BJ (cell line): ENCODE measurements at regions of chr11 and their contacts with region 1.

Region 1: DNA sequence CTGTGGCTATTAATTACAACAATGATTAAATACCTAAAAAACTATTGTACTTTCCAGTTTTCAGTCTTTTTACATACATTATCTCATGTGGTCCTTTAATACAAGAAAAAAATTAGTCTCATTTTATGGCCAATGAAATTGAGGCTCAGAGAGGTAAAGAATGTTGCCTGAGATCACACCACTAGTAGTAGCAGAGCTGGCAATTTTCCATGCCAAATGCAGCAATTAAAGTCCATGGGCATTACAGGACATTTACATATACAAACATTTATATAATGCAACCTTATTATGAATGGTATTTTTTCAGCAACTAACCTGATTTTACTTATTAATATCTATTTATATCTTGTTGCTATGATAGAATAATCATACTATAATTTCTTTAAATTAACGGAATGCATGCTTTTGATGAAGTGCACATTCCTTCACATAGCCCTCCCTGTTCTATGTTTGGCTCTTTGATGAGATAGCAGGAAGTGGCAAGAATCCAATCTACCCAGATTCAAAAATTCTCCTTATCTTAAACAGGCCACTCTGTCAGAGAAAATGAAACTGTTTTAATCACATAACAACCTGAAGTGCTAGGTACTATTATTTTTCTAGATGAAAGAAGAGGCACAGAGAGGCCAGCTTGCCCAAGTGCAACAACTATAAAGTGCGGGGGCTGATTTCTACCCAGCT is 120.9 kb upstream of the LDLRAD3 start:
- DNase-seq: no peak
- H3K4me3 ChIP-seq: no peak overlapping the region
- H3K27me3 ChIP-seq: no peaks in the 10 kb centered on the region; the same call in 1 of the 2 replicates
- CTCF ChIP-seq: no peak

Region 2: GRCh38 chr11:35794850-35795249 is 28.1 kb before region 1 on chr11:
- CTCF ChIA-PET with region 1: interaction called, 20 read pairs
- POLR2A ChIA-PET with region 1: no interaction called
- DNase-seq: no peak
- H3K4me3 ChIP-seq: no peak overlapping the region
- H3K27me3 ChIP-seq: no peaks in the 10 kb centered on the region
- CTCF ChIP-seq: no peak

Region 3: GRCh38 chr11:35836205-35836604 is 13.2 kb after region 1 on chr11:
- CTCF ChIA-PET with region 1: interaction called, 42 read pairs
- POLR2A ChIA-PET with region 1: no interaction called
- DNase-seq: no peak
- H3K4me3 ChIP-seq: no peak overlapping the region
- H3K27me3 ChIP-seq: peaks cover 7% of the 10 kb centered on the region; the same call in 1 of the 2 replicates
- CTCF ChIP-seq: no peak

Region 4: DNA sequence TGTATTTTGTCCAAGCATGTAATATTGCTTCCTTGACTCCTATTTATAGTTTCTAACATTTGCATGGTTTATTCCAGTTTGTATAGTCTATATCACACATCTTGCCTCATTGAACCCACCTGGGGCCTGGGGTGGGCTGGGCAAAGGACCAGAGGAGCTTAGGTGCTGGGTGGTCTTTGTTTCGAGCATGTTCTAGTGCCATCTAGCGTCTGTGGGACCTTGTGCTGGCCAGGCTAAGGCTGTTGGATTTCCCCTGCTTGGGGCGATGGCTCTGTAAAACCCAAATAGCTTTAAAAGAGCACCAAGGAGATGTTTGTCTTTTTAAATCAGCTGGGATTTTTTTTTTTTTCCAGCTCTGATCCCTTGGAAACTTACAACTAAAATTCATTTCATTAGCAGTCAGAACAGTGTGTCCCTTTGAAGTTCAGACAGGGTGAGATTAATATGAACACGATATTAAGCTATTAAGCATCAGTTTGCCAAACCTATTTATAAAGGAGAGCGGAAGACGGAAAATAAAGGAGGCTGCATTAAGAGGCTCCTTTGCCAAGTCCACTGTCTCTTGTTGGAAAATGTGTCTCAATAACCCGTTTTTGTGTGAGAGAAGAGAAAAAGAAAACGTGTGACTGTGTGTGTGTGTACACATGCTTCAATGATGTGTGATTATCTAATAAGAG is 308.9 kb after region 1 on chr11:
- CTCF ChIA-PET with region 1: interaction called, 25 read pairs
- POLR2A ChIA-PET with region 1: no interaction called
- DNase-seq: no peak
- H3K4me3 ChIP-seq: no peak overlapping the region
- H3K27me3 ChIP-seq: no peaks in the 10 kb centered on the region
- CTCF ChIP-seq: peak; percentile 88

Region 5: GRCh38 chr11:36265793-36266628 is 443.1 kb after region 1 on chr11:
- CTCF ChIA-PET with region 1: interaction called, 25 read pairs
- POLR2A ChIA-PET with region 1: no interaction called
- DNase-seq: no peak
- H3K4me3 ChIP-seq: no peak overlapping the region
- H3K27me3 ChIP-seq: peaks cover 2% of the 10 kb centered on the region; the same call in 1 of the 2 replicates
- CTCF ChIP-seq: peak; percentile 87